CD8-positive, alpha-beta T cell (primary cell): ENCODE measurements at regions of chr17 and their contacts with region 1.

Region 1: GRCh38 chr17:10844621-10845387 is 6.9 kb upstream of the PIRT start:
- DNase-seq: peak; percentile 24 to 82 (median 69)
- ATAC-seq: peak; percentile 96
- H3K4me3 ChIP-seq: peak overlapping the region; percentile 25 to 59
- H3K4me3 Mint-ChIP-seq: peak overlapping the region; percentile 81
- H3K27ac ChIP-seq: no peak overlapping the region
- H3K27ac Mint-ChIP-seq: no peak overlapping the region
- H3K4me1 ChIP-seq: peaks cover 5% of the 10 kb centered on the region
- H3K4me1 Mint-ChIP-seq: peaks cover 11% of the 10 kb centered on the region
- H3K27me3 ChIP-seq: peaks cover 0 to 4% of the 10 kb centered on the region in 2 experiments
- H3K27me3 Mint-ChIP-seq: peaks cover 5% of the 10 kb centered on the region
- CTCF ChIP-seq: peak; percentile 97

Region 2: GRCh38 chr17:10640475-10640874 is 204.3 kb before region 1 on chr17:
- CTCF ChIA-PET with region 1: interaction called, 133 read pairs
- POLR2A ChIA-PET with region 1: no interaction called
- intact Hi-C with region 1: no loop called
- DNase-seq: no peak
- ATAC-seq: no peak
- H3K4me3 ChIP-seq: no peak overlapping the region
- H3K4me3 Mint-ChIP-seq: no peak overlapping the region
- H3K27ac ChIP-seq: no peak overlapping the region
- H3K27ac Mint-ChIP-seq: no peak overlapping the region
- H3K4me1 ChIP-seq: no peaks in the 10 kb centered on the region
- H3K4me1 Mint-ChIP-seq: no peaks in the 10 kb centered on the region
- H3K27me3 ChIP-seq: no peaks in the 10 kb centered on the region
- H3K27me3 Mint-ChIP-seq: no peaks in the 10 kb centered on the region
- CTCF ChIP-seq: no peak

Region 3: GRCh38 chr17:10697092-10698081 is 147.4 kb before region 1 on chr17 and contains the starts of genes ADPRM and SCO1:
- CTCF ChIA-PET with region 1: interaction called, 6 read pairs
- POLR2A ChIA-PET with region 1: no interaction called
- intact Hi-C with region 1: loop called in 1 of 2 experiments (anchors 1 kb)
- DNase-seq: peak; percentile 71 to 94 (median 90)
- ATAC-seq: peak; percentile 89
- H3K4me3 ChIP-seq: peak within 1 kb of the TSS; percentile 93 to 95
- H3K4me3 Mint-ChIP-seq: peak within 1 kb of the TSS; percentile 96
- H3K27ac ChIP-seq: peak within 1 kb of the TSS; percentile 84 to 87
- H3K27ac Mint-ChIP-seq: peak within 1 kb of the TSS; percentile 94
- H3K4me1 ChIP-seq: peaks cover 42% of the 10 kb centered on the region
- H3K4me1 Mint-ChIP-seq: peaks cover 65% of the 10 kb centered on the region
- H3K27me3 ChIP-seq: no peaks in the 10 kb centered on the region
- H3K27me3 Mint-ChIP-seq: no peaks in the 10 kb centered on the region
- CTCF ChIP-seq: no peak
- total RNA-seq, gene ADPRM: 24.9 to 25.7 TPM
- total RNA-seq, gene SCO1: 14.2 to 17.1 TPM

Region 4: GRCh38 chr17:10737168-10737622 is 107.6 kb before region 1 on chr17:
- CTCF ChIA-PET with region 1: interaction called, 56 read pairs
- POLR2A ChIA-PET with region 1: no interaction called
- intact Hi-C with region 1: loop called in 1 of 2 experiments (anchors 1 kb)
- DNase-seq: peak in 5 of 9 experiments; percentile 7 to 60 (median 35)
- ATAC-seq: peak; percentile 51
- H3K4me3 ChIP-seq: no peak overlapping the region
- H3K4me3 Mint-ChIP-seq: peak overlapping the region; percentile 29
- H3K27ac ChIP-seq: no peak overlapping the region
- H3K27ac Mint-ChIP-seq: no peak overlapping the region
- H3K4me1 ChIP-seq: peaks cover 6% of the 10 kb centered on the region
- H3K4me1 Mint-ChIP-seq: peaks cover 11% of the 10 kb centered on the region
- H3K27me3 ChIP-seq: no peaks in the 10 kb centered on the region
- H3K27me3 Mint-ChIP-seq: peaks cover 4% of the 10 kb centered on the region
- CTCF ChIP-seq: peak; percentile 46

Region 5: GRCh38 chr17:10772425-10773380 is 72.1 kb before region 1 on chr17:
- CTCF ChIA-PET with region 1: interaction called, 3 read pairs
- POLR2A ChIA-PET with region 1: no interaction called
- intact Hi-C with region 1: loop called in 1 of 2 experiments (anchors 2 kb)
- DNase-seq: peak in 3 of 9 experiments; percentile 14 to 41 (median 30)
- ATAC-seq: no peak
- H3K4me3 ChIP-seq: no peak overlapping the region
- H3K4me3 Mint-ChIP-seq: no peak overlapping the region
- H3K27ac ChIP-seq: no peak overlapping the region
- H3K27ac Mint-ChIP-seq: no peak overlapping the region
- H3K4me1 ChIP-seq: no peaks in the 10 kb centered on the region
- H3K4me1 Mint-ChIP-seq: no peaks in the 10 kb centered on the region
- H3K27me3 ChIP-seq: no peaks in the 10 kb centered on the region
- H3K27me3 Mint-ChIP-seq: no peaks in the 10 kb centered on the region
- CTCF ChIP-seq: peak; percentile 70

Region 6: GRCh38 chr17:10936931-10937330 is 92.1 kb after region 1 on chr17:
- CTCF ChIA-PET with region 1: no interaction called
- POLR2A ChIA-PET with region 1: no interaction called
- intact Hi-C with region 1: no loop called
- DNase-seq: no peak
- ATAC-seq: no peak
- H3K4me3 ChIP-seq: no peak overlapping the region
- H3K4me3 Mint-ChIP-seq: no peak overlapping the region
- H3K27ac ChIP-seq: no peak overlapping the region
- H3K27ac Mint-ChIP-seq: no peak overlapping the region
- H3K4me1 ChIP-seq: no peaks in the 10 kb centered on the region
- H3K4me1 Mint-ChIP-seq: no peaks in the 10 kb centered on the region
- H3K27me3 ChIP-seq: no peaks in the 10 kb centered on the region
- H3K27me3 Mint-ChIP-seq: peaks cover 23% of the 10 kb centered on the region
- CTCF ChIP-seq: no peak